GM12878 (cell line): ENCODE measurements at regions of chr17 and their contacts with region 1.

Region 1: DNA sequence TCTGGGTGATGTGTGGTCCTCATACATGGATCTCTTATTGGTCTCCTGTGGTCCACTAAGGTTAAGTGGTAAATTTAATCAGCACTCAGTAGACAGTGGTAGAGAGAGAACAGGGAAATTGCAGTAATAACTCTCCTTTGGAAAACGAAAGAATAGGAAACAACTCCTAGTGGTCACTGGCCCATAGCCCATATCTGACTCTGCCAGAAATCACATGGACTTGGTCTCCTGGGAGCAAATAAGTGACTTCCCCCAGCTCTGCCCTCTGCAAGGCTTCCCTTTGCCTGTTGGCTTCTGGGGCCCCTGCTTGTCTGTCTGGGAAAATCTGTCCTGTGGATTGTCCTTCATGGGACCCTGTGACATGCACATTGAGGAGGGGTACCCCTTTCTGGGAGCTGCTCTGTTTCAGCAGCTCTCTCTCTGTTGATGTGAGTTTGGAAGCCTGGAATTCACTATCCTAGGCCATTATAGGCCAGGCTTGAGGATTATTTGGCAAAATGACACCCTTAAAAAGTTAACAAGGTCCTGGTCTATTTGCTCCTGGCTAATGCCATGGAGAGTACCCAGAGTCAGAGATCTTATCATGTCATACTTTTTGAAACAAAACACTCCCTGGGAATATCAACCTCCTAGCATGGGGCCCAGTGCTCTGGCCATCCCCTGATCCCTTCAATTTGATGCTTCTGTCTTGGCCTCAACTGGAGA is 58.0 kb upstream of the HNF1B start:
- DNase-seq: no peak
- ATAC-seq: no peak
- H3K4me3 ChIP-seq: no peak overlapping the region
- H3K27ac ChIP-seq: no peak overlapping the region
- H3K4me1 ChIP-seq: peaks cover 9% of the 10 kb centered on the region
- H3K27me3 ChIP-seq: no peaks in the 10 kb centered on the region
- CTCF ChIP-seq: no peak
- EP300 ChIP-seq: no peak
- POLR2A ChIP-seq: no peak
- RAD21 ChIP-seq: no peak

Region 2: GRCh38 chr17:37884516-37884915 is 81.7 kb after region 1 on chr17:
- CTCF ChIA-PET with region 1: no interaction called
- POLR2A ChIA-PET with region 1: interaction called, 12 read pairs
- RAD21 ChIA-PET with region 1: no interaction called
- SMC1A ChIA-PET with region 1: no interaction called
- in situ Hi-C with region 1: no loop called
- intact Hi-C with region 1: no loop called
- DNase-seq: peak; percentile 37
- ATAC-seq: peak; percentile 86
- H3K4me3 ChIP-seq: no peak overlapping the region
- H3K27ac ChIP-seq: no peak overlapping the region
- H3K4me1 ChIP-seq: no peaks in the 10 kb centered on the region
- H3K27me3 ChIP-seq: no peaks in the 10 kb centered on the region
- CTCF ChIP-seq: no peak
- EP300 ChIP-seq: no peak; a peak in 1 of 4 replicates
- POLR2A ChIP-seq: no peak
- RAD21 ChIP-seq: no peak